Activated T-helper 2 cell treated with anti-CD3 and anti-CD28 coated beads, Interferon-gamma antibody, Interleukin-2, Interleukin-4, amounts not matched to agents 10 μg/mL and 5 μg/mL and 100 μg/mL, durations not matched to agents 14 hours and 24 hours and 36 hours (primary cell): ENCODE measurements at regions of chr4 and their contacts with region 1.

Region 1: DNA sequence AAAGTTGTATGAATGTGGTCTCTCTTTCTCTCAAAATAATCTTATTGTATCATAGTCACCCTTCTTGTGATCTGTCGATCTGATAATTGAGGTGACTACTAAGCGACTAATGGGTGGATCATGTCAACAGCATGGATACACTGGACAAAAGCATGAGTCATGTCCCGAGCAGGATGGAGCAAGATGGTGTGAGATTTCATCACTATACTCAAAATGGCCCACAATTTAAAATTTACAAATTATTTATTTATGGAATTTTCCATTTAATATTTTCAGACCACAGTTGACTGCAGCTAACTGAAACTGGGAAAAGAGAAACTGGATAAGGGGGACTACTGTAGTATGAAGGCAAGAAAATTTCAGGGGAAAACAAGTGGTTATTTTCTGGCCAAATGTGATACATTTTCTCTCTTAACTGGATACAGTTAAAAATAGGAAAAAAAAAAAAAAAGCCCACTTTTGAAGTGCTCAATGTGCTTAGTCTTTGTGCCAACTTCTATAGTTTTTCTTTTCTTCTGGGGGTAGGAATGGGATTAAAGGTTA is 25.3 kb downstream of the FAM241A start:
- DNase-seq: no peak
- H3K4me3 Mint-ChIP-seq: no peak overlapping the region
- H3K27ac Mint-ChIP-seq: no peak overlapping the region
- H3K4me1 Mint-ChIP-seq: peaks cover 36% of the 10 kb centered on the region
- H3K27me3 Mint-ChIP-seq: peaks cover 2% of the 10 kb centered on the region

Region 2: DNA sequence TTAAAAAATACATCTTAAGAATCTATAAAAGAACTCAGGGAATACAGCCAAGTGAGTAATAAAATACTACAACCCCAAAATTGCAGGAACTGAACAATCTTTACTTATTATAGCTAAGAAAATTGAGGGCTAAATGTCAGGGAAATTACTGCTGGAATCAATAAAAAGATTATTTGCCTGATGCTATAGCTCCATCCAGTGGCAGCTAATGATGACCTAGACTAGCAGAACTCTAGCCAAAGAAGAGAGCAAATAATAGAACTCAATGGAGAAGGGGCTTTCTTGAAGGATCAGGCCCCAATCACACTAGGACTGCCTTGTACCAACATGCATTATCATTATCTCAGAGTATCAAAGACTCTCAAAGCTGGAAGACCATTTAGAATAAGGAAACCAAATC is 110.3 kb before region 1 on chr4:
- intact Hi-C with region 1: no loop called
- DNase-seq: no peak
- H3K4me3 Mint-ChIP-seq: no peak overlapping the region
- H3K27ac Mint-ChIP-seq: no peak overlapping the region
- H3K4me1 Mint-ChIP-seq: peaks cover 3% of the 10 kb centered on the region
- H3K27me3 Mint-ChIP-seq: peaks cover 10% of the 10 kb centered on the region

Region 3: DNA sequence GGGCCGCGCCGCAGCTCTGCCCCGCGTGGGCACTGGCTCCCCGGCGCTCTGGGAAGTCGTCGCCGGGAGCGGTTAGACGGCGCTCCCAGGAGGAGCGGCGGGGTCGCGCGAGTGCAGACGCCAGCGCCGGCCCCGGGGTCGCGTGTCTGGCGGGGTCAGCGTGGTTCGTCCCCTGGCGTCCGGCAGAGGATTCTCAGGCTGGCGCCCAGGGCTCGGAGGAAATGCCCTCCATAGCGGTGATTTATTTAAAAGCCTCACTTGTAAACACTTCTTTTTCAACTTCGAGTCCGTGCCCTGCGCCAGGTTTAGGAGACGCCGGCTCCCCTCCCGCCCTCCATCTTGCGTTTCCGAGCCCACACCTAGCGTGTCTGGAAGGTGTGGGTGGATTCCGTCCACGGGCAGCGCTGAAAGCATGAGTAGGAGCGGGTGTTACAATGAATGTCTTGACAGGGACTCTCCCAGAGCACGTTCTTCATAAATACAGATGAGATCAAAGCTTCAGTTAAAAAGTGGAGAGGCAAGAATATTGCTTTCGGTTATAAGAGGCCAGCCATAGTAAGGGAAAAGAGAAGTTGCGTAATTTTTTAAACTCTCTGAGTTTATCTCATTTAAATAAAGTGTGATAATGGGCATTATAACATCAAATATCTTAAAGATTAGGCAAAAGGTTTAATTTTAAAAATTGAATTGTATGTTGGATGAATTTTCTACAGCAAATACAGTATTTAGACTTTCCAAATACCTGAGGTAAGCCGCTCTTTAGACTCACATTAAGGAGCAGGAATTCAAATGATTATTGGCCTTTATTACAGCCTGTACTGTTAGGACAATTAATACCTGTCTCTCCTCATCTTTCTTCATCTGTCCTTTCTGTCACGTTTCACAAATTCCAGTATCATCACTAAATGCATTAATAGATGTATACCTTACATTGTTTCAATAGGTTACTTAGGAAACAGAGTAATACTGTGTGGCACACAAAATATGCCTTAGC is 24.4 kb before region 1 on chr4:
- intact Hi-C with region 1: loop called (anchors 2 kb)
- DNase-seq: peak; percentile 44
- H3K4me3 Mint-ChIP-seq: peak overlapping the region; percentile 85
- H3K27ac Mint-ChIP-seq: peak overlapping the region; percentile 92
- H3K4me1 Mint-ChIP-seq: peaks cover 35% of the 10 kb centered on the region
- H3K27me3 Mint-ChIP-seq: no peaks in the 10 kb centered on the region

Region 4: GRCh38 chr4:112153211-112153791 is 17.2 kb before region 1 on chr4:
- intact Hi-C with region 1: loop called (anchors 2 kb)
- DNase-seq: no peak
- H3K4me3 Mint-ChIP-seq: peak overlapping the region; percentile 57
- H3K27ac Mint-ChIP-seq: peak overlapping the region; percentile 83
- H3K4me1 Mint-ChIP-seq: peaks cover 35% of the 10 kb centered on the region
- H3K27me3 Mint-ChIP-seq: no peaks in the 10 kb centered on the region

Region 5: DNA sequence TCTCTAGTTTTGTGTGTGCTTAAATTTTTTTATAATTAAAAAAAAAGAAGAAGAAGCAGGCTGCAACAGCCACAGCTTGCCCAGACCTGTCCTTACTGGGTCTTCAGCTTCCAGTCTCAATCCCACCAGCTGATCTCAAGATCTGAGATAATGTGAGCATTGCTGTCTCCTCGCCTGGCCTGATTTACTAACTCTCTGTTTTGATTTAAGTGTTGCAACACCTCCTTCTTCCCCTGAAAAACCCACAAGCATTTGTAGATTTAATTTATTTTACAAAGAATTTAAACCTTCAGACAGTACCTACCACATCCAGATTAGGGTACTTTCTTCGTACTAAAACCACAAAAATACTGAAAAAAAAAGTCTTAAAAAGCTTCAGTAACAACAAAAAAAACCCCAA is 12.7 kb after region 1 on chr4:
- intact Hi-C with region 1: loop called (anchors 2 kb)
- DNase-seq: no peak
- H3K4me3 Mint-ChIP-seq: no peak overlapping the region
- H3K27ac Mint-ChIP-seq: peak overlapping the region; percentile 35
- H3K4me1 Mint-ChIP-seq: peaks cover 34% of the 10 kb centered on the region
- H3K27me3 Mint-ChIP-seq: no peaks in the 10 kb centered on the region